ENCODE measurements at regions of chr11 and their contacts with region 1.

Region 1: DNA sequence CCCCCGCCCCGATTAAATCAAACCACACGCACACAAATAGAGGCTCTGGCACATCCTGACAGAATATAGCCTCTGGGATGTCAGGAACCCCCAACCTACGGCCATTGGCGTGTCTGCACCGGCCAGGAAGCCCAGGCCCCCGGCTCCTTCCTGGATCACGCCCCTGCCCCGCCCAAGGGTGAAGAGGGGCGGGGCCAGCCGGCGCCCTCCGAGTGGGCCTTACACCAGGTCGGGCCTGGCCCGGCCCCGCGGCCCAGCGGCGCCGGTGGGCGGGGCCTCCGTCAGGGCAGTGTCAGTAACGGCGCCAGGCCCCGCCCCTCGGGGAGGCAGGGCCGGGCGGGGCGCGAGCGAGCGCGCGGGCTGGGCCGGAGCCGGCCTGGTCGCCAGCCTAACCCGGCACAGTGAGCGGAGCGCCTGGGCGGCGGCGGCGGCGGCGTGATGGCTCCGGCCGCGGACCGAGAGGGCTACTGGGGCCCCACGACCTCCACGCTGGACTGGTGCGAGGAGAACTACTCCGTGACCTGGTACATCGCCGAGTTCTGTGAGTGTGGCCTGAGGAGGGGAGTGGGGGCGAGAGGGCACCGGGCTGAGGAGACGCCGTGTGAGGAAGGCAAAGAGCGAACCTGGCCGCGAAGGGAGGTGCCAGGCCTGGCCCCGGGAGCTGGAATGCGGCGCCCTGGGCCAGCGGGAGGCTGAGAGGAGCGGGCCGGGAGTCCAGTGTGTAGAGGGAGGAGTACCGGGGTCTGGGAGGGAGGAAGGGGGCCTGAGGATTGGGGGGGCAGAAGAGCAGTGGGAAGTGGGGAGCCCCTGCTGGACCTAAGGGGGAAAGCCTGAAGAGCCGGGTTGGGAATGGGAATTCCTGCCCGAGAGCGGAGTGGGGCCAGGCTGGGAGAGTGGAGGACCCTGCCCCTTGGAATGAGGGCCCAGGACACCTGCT is at the start of gene ACER3:
- DNase-seq: peak; percentile 78
- ATAC-seq: peak; percentile 100
- H3K4me3 ChIP-seq: peak within 1 kb of the TSS; percentile 94
- H3K27ac ChIP-seq: peak within 1 kb of the TSS; percentile 78
- H3K4me1 ChIP-seq: peaks cover 6% of the 10 kb centered on the region
- H3K27me3 ChIP-seq: no peaks in the 10 kb centered on the region
- CTCF ChIP-seq: peak; percentile 24; the same call in 1 of the 2 replicates
- POLR2A ChIP-seq: peak; percentile 83
- RAD21 ChIP-seq: peak; percentile 9; the same call in 1 of the 2 replicates
- total RNA-seq, gene ACER3: 10.0 and 10.3 TPM in 2 replicates

Region 2: DNA sequence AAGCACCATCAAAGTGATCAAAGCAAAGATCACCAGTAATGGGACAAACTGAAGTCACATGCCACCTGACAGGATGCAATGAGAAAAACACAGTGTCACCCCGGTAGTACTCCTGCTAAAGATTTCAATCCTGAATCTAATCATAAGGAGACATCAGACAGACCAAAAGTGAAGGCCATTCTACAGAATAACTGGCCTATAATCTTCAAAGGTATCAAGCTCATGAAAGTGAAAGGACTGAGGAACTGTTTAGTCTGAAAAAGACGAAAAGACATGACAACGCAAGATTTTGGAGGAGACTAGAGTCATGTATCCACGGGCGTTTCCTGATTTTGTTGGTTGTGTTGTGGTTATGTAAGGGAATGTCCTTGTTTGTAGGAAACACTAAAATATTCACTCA is 120.0 kb before region 1 on chr11:
- CTCF ChIA-PET with region 1: no interaction called
- POLR2A ChIA-PET with region 1: no interaction called
- dilution Hi-C with region 1: no loop called
- in situ Hi-C with region 1: no loop called
- intact Hi-C with region 1: no loop called
- DNase-seq: no peak
- ATAC-seq: no peak
- H3K4me3 ChIP-seq: no peak overlapping the region
- H3K27ac ChIP-seq: no peak overlapping the region
- H3K4me1 ChIP-seq: no peaks in the 10 kb centered on the region; the same call in 1 of the 2 replicates
- H3K27me3 ChIP-seq: peaks cover 53% of the 10 kb centered on the region
- CTCF ChIP-seq: no peak
- POLR2A ChIP-seq: no peak
- RAD21 ChIP-seq: no peak

Region 3: DNA sequence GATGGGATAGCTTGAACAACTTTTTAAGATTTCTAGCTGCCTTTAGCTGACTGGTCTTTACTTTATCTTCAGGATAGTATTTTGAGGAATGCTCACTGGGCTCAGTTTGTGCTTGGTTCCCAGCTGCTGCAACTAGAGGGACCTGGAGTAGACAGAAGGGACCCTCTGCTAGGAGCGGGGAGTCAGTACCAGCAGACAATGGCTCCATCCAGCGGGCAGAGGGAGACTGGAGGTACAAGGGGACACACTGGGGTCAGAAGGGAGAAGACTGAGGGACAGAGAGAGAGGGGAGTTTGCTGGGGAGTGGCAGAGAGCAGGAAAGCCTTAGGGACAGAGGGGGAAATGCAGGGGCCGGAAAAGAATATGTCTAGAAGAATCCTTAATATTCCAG is 22.1 kb before region 1 on chr11:
- CTCF ChIA-PET with region 1: no interaction called
- POLR2A ChIA-PET with region 1: interaction called, 12 read pairs
- dilution Hi-C with region 1: no loop called
- in situ Hi-C with region 1: no loop called
- intact Hi-C with region 1: no loop called
- DNase-seq: no peak
- ATAC-seq: peak; percentile 25; the same call in 1 of the 2 replicates
- H3K4me3 ChIP-seq: no peak overlapping the region
- H3K27ac ChIP-seq: no peak overlapping the region
- H3K4me1 ChIP-seq: peaks cover 5% of the 10 kb centered on the region; the same call in 1 of the 2 replicates
- H3K27me3 ChIP-seq: peaks cover 55% of the 10 kb centered on the region
- CTCF ChIP-seq: peak; percentile 44
- POLR2A ChIP-seq: no peak
- RAD21 ChIP-seq: peak; percentile 59

Region 4: DNA sequence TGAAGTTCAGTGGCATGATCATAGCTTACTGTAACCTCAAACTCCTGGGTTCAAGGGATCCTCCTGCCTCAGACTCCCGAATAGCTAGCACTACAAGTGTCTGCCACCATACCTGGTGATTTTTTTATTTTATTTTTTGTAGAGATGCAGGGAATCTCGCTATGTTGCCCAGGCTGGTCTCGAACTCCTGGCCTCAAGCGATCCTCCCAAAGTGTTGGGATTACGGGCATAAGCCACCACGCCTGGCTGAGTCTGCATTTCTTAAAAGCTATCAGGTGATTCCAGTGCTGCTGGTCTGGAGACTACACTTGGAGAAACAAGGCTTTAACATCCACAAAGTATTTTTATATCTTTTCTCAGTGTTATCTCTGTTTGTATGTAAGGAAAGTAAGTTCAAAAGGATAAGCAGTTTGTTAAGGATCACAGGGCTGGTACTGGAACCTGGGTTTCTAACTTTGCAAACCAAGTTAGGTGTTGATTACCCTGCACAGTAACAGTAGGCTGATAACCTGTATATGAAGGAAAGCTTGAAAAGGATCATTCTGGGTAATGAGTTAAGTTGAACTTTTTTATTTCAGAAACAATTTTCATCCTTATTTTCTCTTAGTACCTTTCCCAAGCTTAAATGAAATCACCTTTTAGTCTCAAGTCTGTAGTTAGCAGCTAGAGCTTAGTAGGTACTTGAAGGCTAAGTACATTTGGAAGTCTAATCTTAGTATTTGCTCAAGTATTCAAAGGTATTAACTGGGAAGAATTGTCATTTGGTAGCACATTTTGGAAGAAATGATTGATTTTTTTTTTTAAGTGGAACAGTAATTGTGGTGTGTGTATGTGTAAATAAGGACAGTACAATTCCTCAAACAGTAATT is 12.4 kb after region 1 on chr11:
- CTCF ChIA-PET with region 1: no interaction called
- POLR2A ChIA-PET with region 1: no interaction called
- dilution Hi-C with region 1: no loop called
- in situ Hi-C with region 1: no loop called
- intact Hi-C with region 1: no loop called
- DNase-seq: no peak
- ATAC-seq: no peak
- H3K4me3 ChIP-seq: no peak overlapping the region
- H3K27ac ChIP-seq: no peak overlapping the region
- H3K4me1 ChIP-seq: no peaks in the 10 kb centered on the region
- H3K27me3 ChIP-seq: no peaks in the 10 kb centered on the region
- CTCF ChIP-seq: no peak
- POLR2A ChIP-seq: no peak
- RAD21 ChIP-seq: no peak